ENCODE measurements at regions of chr3 and their contacts with region 1.

Region 1: GRCh38 chr3:34547297-34547915 is 749.0 kb downstream of the PDCD6IP start:
- DNase-seq: no peak
- H3K4me3 ChIP-seq: no peak overlapping the region
- H3K27ac ChIP-seq: no peak overlapping the region
- H3K4me1 ChIP-seq: no peaks in the 10 kb centered on the region
- H3K27me3 ChIP-seq: no peaks in the 10 kb centered on the region
- CTCF ChIP-seq: no peak
- POLR2A ChIP-seq: no peak

Region 2: DNA sequence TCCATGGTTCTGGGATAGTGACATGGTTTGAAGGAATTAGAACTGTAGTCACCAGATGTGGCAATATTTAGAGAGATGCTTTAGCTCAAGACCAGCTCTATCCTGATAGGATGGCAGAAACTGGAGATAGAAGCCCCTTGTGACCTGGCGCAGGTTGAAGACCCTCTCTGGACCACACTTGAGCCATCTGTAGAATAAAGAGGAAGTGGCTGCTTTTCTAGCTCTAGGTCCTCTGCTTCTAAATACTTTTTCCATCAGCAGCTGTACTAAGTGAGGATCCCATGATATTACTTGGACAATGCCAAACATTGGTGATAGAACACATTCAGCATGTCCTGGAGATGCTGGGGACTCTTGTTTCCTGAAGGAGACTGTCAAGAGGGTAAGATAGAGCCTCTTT is 576.4 kb before region 1 on chr3:
- intact Hi-C with region 1: loop called (anchors 5 kb)
- DNase-seq: no peak
- H3K4me3 ChIP-seq: no peak overlapping the region
- H3K27ac ChIP-seq: no peak overlapping the region
- H3K4me1 ChIP-seq: no peaks in the 10 kb centered on the region
- H3K27me3 ChIP-seq: no peaks in the 10 kb centered on the region
- CTCF ChIP-seq: no peak
- POLR2A ChIP-seq: no peak